Activated CD4-positive, alpha-beta T cell treated with anti-CD3 and anti-CD28 coated beads for 36 hours (primary cell): ENCODE measurements at regions of chr2 and their contacts with region 1.

Region 1: DNA sequence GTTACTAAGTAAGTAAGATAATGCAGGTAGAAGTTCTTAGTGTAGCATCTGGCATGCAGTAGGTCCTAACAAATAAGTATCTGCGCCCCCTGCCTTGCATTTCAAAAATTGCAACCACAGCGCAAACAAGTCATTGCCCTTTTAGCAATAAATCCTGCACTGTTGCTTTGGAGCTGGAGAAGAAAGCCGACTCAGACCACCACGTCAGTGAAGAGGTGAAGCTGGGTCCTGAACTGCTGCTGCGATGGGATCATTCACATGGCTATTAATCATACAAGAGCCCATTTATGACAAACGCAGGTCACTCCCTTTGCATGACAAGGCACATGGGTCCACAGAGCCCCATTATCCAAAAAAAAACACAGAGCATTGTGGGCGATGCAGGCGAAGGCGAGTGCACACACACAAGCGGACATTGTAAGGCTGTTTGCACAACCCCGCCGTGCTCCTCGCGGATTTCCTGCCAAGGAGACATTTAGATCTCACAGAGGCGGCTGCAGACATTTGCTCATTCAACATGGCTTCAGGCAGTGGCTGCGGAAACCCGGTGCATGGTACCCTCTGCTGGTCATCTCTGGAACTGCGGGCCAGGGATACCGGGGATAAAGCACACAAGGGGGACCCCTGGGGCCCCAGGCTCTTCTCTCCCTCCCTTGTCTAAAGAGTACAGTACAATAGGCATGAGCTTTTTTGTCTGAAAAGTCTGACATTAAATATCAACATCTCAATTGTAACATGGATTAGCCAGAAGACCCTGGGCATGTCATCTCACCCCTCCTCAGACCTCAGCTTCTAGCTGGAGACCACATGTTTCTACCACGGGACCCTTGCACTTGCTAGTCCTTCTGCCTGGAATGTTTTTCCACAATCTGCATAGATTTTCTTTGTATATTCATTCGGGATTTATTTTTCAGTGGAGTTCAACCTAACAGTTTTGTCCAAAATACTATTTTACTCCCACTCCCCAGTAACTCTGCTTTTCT is 56.7 kb downstream of the CYRIA start:
- DNase-seq: peak; percentile 92
- ATAC-seq: peak; percentile 87
- H3K4me3 Mint-ChIP-seq: peak overlapping the region; percentile 74
- H3K27ac Mint-ChIP-seq: peak overlapping the region; percentile 65
- H3K4me1 Mint-ChIP-seq: peaks cover 6% of the 10 kb centered on the region
- H3K27me3 Mint-ChIP-seq: no peaks in the 10 kb centered on the region

Region 2: DNA sequence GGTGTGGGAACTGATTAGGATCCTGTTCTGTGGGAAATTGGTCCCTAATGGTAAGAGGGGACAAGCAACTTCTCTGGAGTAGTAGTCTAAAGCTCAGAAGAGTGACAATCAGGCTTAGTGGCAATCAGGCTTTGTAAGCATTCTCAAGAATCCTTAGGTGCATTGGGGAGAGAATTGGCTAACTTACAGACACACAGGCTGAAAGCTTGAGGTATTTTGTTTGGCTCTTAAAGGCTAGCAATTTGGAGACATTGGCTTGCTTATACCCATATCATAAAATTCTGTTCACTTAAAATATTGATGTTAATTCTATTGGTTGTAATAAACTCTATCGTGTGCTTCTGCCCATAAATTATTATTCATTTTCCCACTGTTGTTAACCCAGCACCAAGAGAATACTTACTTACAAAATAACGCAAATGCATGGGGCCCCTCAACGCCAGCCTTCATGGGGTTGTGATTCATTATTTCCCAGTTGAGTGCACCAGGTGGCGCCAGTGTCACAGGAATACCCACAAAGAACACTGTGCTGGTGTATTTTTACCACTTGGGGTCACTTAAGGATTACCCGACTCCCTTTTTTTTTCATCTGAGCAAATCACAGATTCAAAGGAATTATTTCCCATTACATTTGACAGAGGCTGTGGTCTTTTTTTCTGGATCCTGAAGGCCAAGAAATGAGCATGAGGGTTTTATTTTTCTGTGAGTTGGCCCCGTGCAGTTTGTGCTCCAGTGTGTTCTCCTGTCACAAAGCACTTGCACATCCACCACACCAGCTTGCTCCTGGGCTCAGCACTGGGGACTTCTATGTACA is 971.8 kb before region 1 on chr2:
- CTCF ChIA-PET with region 1: interaction called, 6 read pairs
- POLR2A ChIA-PET with region 1: no interaction called
- intact Hi-C with region 1: loop called (anchors 1 kb)
- DNase-seq: peak; percentile 77
- ATAC-seq: peak; percentile 89
- H3K4me3 Mint-ChIP-seq: no peak overlapping the region
- H3K27ac Mint-ChIP-seq: no peak overlapping the region
- H3K4me1 Mint-ChIP-seq: peaks cover 6% of the 10 kb centered on the region
- H3K27me3 Mint-ChIP-seq: no peaks in the 10 kb centered on the region

Region 3: GRCh38 chr2:15788830-15789229 is 820.1 kb before region 1 on chr2:
- CTCF ChIA-PET with region 1: no interaction called
- POLR2A ChIA-PET with region 1: no interaction called
- intact Hi-C with region 1: no loop called
- DNase-seq: no peak
- ATAC-seq: no peak
- H3K4me3 Mint-ChIP-seq: no peak overlapping the region
- H3K27ac Mint-ChIP-seq: no peak overlapping the region
- H3K4me1 Mint-ChIP-seq: no peaks in the 10 kb centered on the region
- H3K27me3 Mint-ChIP-seq: peaks cover 4% of the 10 kb centered on the region

Region 4: GRCh38 chr2:16525265-16525887 is 83.6 kb before region 1 on chr2:
- CTCF ChIA-PET with region 1: interaction called, 8 read pairs
- POLR2A ChIA-PET with region 1: no interaction called
- intact Hi-C with region 1: loop called (anchors 1 to 2 kb)
- DNase-seq: peak; percentile 59
- ATAC-seq: no peak
- H3K4me3 Mint-ChIP-seq: no peak overlapping the region
- H3K27ac Mint-ChIP-seq: no peak overlapping the region
- H3K4me1 Mint-ChIP-seq: no peaks in the 10 kb centered on the region
- H3K27me3 Mint-ChIP-seq: peaks cover 14% of the 10 kb centered on the region

Region 5: GRCh38 chr2:16553226-16553625 is 55.7 kb before region 1 on chr2:
- CTCF ChIA-PET with region 1: interaction called, 10 read pairs
- POLR2A ChIA-PET with region 1: no interaction called
- intact Hi-C with region 1: loop called (anchors 1 to 2 kb)
- DNase-seq: peak; percentile 40
- ATAC-seq: no peak
- H3K4me3 Mint-ChIP-seq: no peak overlapping the region
- H3K27ac Mint-ChIP-seq: no peak overlapping the region
- H3K4me1 Mint-ChIP-seq: no peaks in the 10 kb centered on the region
- H3K27me3 Mint-ChIP-seq: peaks cover 11% of the 10 kb centered on the region

Region 6: GRCh38 chr2:16625201-16625729 is 16.3 kb after region 1 on chr2:
- CTCF ChIA-PET with region 1: interaction called, 19 read pairs
- POLR2A ChIA-PET with region 1: no interaction called
- intact Hi-C with region 1: no loop called
- DNase-seq: no peak
- ATAC-seq: no peak
- H3K4me3 Mint-ChIP-seq: no peak overlapping the region
- H3K27ac Mint-ChIP-seq: peak overlapping the region; percentile 48
- H3K4me1 Mint-ChIP-seq: peaks cover 50% of the 10 kb centered on the region
- H3K27me3 Mint-ChIP-seq: no peaks in the 10 kb centered on the region

Region 7: GRCh38 chr2:16900405-16901025 is 291.6 kb after region 1 on chr2:
- CTCF ChIA-PET with region 1: no interaction called
- POLR2A ChIA-PET with region 1: no interaction called
- intact Hi-C with region 1: loop called in 1 of 2 experiments (anchors 2 kb)
- DNase-seq: peak; percentile 46
- ATAC-seq: peak; percentile 39
- H3K4me3 Mint-ChIP-seq: no peak overlapping the region
- H3K27ac Mint-ChIP-seq: no peak overlapping the region
- H3K4me1 Mint-ChIP-seq: no peaks in the 10 kb centered on the region
- H3K27me3 Mint-ChIP-seq: no peaks in the 10 kb centered on the region